Pancreas (tissue), 10 donors: ENCODE measurements at regions of chr4 and their contacts with region 1.

Region 1: GRCh38 chr4:120049732-120050494 is 16.7 kb downstream of the MAD2L1 start:
- DNase-seq: peak in 5 of 6 donors; percentile 62 to 87 (median 68)
- ATAC-seq: peak; percentile 97 to 100 (median 99)
- H3K4me3 ChIP-seq: no peak overlapping the region
- H3K27ac ChIP-seq: no peak overlapping the region
- H3K4me1 ChIP-seq: no peaks in the 10 kb centered on the region
- H3K27me3 ChIP-seq: no peaks in the 10 kb centered on the region
- CTCF ChIP-seq: peak; percentile 68 to 77 (median 72)

Region 2: DNA sequence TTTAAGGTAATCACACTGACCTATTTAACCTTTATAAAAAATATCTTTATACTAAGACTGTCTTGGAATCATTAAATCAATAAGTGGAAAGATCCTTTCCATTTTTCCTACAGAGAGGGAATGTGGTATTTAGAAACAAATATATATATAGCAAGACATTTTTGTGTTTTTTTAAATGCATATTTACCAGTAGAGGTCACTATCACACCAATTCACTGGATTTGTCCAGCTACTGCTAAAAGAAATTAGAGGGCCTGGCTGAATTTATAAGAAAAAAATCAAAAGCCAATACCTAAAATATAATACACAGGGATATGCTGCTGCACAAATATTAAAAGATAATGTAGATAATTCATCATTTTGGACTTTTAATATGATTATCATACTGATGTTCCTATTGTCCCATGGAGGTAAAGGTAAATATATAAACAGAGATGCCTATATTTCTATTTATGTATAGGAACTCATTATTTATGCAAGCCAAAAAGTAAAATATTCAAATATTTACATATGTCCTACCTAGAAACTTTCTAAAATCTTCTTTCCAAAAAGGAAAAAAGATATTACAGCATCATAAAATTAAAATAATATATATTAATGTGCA is 490.8 kb before region 1 on chr4:
- intact Hi-C with region 1: loop called in 2 of 3 experiments (anchors 5 to 10 kb)
- DNase-seq: no peak
- ATAC-seq: peak; percentile 58 to 75 (median 68)
- H3K4me3 ChIP-seq: no peak overlapping the region
- H3K27ac ChIP-seq: no peak overlapping the region
- H3K4me1 ChIP-seq: no peaks in the 10 kb centered on the region
- H3K27me3 ChIP-seq: no peaks in the 10 kb centered on the region
- CTCF ChIP-seq: peak in 3 of 4 donors; percentile 29 to 45 (median 42)